ENCODE measurements at regions of chr1 and their contacts with region 1.

Region 1: GRCh38 chr1:116737020-116737854 is 17.0 kb upstream of the CD2 start:
- DNase-seq: peak; percentile 87
- ATAC-seq: peak; percentile 49
- H3K4me3 Mint-ChIP-seq: peak overlapping the region; percentile 71
- H3K27ac Mint-ChIP-seq: peak overlapping the region; percentile 97
- H3K4me1 Mint-ChIP-seq: peaks cover 61% of the 10 kb centered on the region
- H3K27me3 Mint-ChIP-seq: no peaks in the 10 kb centered on the region

Region 2: DNA sequence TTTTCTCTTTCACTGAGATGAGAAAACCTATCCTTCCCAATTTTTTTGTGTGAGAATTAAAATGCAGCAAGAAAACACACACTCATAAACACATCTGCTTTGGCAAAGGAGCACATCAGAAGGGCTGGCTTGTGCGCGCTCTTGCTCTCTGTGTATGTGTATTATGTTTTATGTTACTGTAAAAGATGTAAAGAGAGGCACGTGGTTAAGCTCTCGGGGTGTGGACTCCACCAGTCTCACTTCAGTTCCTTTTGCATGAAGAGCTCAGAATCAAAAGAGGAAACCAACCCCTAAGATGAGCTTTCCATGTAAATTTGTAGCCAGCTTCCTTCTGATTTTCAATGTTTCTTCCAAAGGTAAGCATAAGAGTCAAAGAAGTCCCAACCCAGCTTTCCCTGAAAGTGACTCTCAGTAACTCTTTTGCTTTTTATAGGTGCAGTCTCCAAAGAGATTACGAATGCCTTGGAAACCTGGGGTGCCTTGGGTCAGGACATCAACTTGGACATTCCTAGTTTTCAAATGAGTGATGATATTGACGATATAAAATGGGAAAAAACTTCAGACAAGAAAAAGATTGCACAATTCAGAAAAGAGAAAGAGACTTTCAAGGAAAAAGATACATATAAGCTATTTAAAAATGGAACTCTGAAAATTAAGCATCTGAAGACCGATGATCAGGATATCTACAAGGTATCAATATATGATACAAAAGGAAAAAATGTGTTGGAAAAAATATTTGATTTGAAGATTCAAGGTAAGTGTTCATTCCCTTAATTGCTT is 17.2 kb after region 1 on chr1 and contains the start of gene CD2:
- CTCF ChIA-PET with region 1: interaction called, 176 read pairs
- POLR2A ChIA-PET with region 1: interaction called, 548 read pairs
- DNase-seq: peak; percentile 79
- ATAC-seq: peak; percentile 75
- H3K4me3 Mint-ChIP-seq: peak within 1 kb of the TSS; percentile 99
- H3K27ac Mint-ChIP-seq: peak within 1 kb of the TSS; percentile 98
- H3K4me1 Mint-ChIP-seq: peaks cover 42% of the 10 kb centered on the region
- H3K27me3 Mint-ChIP-seq: no peaks in the 10 kb centered on the region
- total RNA-seq, gene CD2: 186 to 189 TPM

Region 3: GRCh38 chr1:116785006-116785405 is 47.8 kb after region 1 on chr1:
- CTCF ChIA-PET with region 1: interaction called, 16 read pairs
- POLR2A ChIA-PET with region 1: no interaction called
- DNase-seq: no peak
- ATAC-seq: no peak
- H3K4me3 Mint-ChIP-seq: no peak overlapping the region
- H3K27ac Mint-ChIP-seq: no peak overlapping the region
- H3K4me1 Mint-ChIP-seq: peaks cover 22% of the 10 kb centered on the region
- H3K27me3 Mint-ChIP-seq: no peaks in the 10 kb centered on the region

Region 4: DNA sequence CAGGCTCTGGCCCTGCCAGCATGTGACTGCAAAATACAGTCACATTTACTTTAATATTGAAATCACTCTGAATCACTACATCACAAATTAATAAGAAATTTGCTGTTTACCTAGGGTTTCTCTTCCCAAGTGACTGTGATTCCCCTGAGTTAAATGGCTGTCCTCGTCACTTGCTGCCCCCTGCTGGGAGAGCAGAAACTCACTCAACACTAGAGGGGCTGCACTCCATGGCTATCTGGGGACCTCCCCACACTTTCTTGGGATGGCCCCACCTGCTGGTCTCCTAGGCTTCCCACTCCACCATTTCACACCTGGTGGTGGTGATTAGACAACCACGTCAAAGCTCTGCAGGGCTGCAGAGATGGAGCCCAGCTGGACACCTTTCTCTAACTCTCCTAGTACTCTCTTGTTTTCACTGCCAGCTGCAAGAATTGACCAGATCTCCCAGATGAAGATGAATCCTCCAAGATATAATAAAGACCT is 80.4 kb after region 1 on chr1:
- CTCF ChIA-PET with region 1: interaction called, 124 read pairs
- POLR2A ChIA-PET with region 1: interaction called, 18 read pairs
- DNase-seq: peak; percentile 83
- ATAC-seq: peak; percentile 75
- H3K4me3 Mint-ChIP-seq: peak overlapping the region; percentile 44
- H3K27ac Mint-ChIP-seq: peak overlapping the region; percentile 73
- H3K4me1 Mint-ChIP-seq: peaks cover 61% of the 10 kb centered on the region
- H3K27me3 Mint-ChIP-seq: no peaks in the 10 kb centered on the region

Region 5: DNA sequence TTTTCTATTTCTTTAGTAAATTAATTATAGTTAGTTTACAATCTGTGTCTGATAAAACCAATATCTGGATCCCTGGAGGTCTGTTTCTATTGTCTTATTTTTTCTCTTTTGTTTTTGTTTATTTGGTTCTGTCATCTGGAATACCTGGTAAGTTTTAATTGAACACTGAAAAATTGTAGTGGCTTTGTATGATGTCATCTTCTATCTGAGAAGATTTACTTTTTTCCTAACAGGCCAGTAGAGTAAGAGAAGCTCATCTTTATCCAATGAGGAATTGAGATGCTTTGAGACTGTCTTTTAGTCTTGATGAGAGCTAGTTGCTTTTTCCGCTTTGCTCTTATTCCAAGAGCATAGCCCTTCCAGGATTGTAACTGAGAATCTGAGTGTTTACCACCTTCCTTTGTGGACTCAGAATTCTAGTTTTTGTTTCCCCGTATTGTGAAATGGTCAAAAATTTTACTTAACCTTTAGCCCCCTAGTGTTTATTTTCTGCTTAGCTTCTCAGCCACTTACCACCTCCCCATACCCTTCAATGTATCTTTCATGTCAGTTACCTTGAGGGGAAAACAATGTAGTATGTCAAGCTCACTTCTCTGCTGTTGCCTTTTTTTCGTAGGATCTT is 197.5 kb after region 1 on chr1:
- CTCF ChIA-PET with region 1: interaction called, 39 read pairs
- POLR2A ChIA-PET with region 1: interaction called, 3 read pairs
- DNase-seq: peak; percentile 27
- ATAC-seq: peak; percentile 73
- H3K4me3 Mint-ChIP-seq: no peak overlapping the region
- H3K27ac Mint-ChIP-seq: peak overlapping the region; percentile 72
- H3K4me1 Mint-ChIP-seq: peaks cover 26% of the 10 kb centered on the region
- H3K27me3 Mint-ChIP-seq: peaks cover 2% of the 10 kb centered on the region